Mammary epithelial cell (primary cell): ENCODE measurements at regions of chr1 and their contacts with region 1.

Region 1: DNA sequence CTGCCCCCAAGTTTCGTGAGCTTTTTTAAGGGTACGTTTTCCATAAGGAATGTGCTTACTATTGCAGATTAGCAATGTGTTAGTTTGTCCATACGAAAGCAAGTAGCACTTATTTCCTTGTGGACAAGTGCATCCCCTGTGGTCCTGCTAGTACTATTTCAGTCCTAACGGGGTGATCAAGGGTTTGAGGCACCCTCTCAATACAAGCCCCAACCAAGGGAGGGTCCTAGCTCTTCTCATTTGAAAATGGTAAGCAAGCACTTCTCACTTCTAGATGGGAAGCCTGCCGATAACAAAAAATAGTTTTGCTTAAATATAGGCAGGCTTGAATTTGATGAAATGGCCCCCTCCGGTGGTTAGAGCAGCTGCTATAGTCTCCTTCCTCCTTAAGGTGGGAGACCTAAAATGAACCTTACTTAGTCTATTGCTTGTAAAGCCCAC is 64.0 kb upstream of the HMCN1 start:
- DNase-seq: peak; percentile 35
- H3K4me3 ChIP-seq: no peak overlapping the region
- H3K27ac ChIP-seq: no peak overlapping the region
- H3K4me1 ChIP-seq: no peaks in the 10 kb centered on the region
- H3K27me3 ChIP-seq: no peaks in the 10 kb centered on the region
- CTCF ChIP-seq: peak; percentile 54 to 66

Region 2: DNA sequence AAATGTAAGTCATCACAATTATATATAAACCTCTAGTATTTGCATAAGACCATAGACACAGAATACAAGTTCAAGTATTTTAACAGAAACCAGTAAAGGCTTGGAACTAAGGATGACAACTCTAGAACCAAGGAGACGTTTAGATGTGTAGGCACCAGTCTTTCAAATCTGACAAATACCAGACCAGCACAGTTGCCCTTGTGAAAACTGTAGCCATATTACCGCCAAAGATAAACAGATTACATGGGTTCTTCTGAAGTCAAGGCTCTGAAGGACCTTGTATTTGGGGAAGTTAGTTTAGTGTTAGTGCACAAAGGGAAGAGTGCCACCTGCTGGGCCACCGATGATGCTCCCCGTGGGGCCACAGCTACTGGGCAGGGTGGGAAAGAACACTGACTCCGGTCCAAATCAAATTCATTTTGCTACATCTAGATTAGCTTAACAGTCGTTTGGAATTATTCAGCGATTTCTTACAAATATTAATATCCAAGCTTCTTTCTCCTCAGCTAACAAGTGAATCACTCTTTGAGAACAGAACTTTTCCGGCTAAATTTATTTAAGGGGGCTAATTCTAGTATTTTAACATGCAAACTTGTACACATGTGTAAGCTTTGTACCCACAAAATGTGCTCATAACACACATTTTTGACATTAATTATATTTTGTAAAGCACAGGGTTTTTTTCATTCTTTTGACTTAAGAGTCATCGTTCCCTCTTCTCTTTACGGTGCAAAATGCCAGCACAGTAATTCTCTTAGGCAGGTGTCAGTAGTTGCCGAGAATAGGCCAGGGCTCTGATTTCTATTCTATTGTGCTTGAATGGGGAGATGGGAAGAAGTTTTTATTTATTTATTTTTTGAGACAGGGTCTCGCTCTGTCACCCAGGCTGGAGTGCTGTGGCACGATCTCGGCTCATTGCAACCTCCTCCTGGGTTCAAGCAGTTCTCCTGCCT is 687.9 kb before region 1 on chr1:
- CTCF ChIA-PET with region 1: no interaction called
- dilution Hi-C with region 1: no loop called
- in situ Hi-C with region 1: no loop called
- intact Hi-C with region 1: loop called (anchors 5 kb)
- DNase-seq: peak; percentile 58
- H3K4me3 ChIP-seq: no peak overlapping the region
- H3K27ac ChIP-seq: no peak overlapping the region
- H3K4me1 ChIP-seq: no peaks in the 10 kb centered on the region
- H3K27me3 ChIP-seq: peaks cover 2% of the 10 kb centered on the region
- CTCF ChIP-seq: peak; percentile 94 to 98

Region 3: GRCh38 chr1:185238447-185238846 is 431.8 kb before region 1 on chr1:
- CTCF ChIA-PET with region 1: no interaction called
- dilution Hi-C with region 1: no loop called
- in situ Hi-C with region 1: no loop called
- intact Hi-C with region 1: loop called (anchors 1 kb)
- DNase-seq: no peak
- H3K4me3 ChIP-seq: no peak overlapping the region
- H3K27ac ChIP-seq: no peak overlapping the region
- H3K4me1 ChIP-seq: no peaks in the 10 kb centered on the region
- H3K27me3 ChIP-seq: no peaks in the 10 kb centered on the region
- CTCF ChIP-seq: peak; percentile 44 to 57

Region 4: GRCh38 chr1:185338719-185339622 is 331.2 kb before region 1 on chr1:
- CTCF ChIA-PET with region 1: no interaction called
- dilution Hi-C with region 1: no loop called
- in situ Hi-C with region 1: no loop called
- intact Hi-C with region 1: no loop called
- DNase-seq: peak; percentile 26
- H3K4me3 ChIP-seq: no peak overlapping the region
- H3K27ac ChIP-seq: no peak overlapping the region
- H3K4me1 ChIP-seq: no peaks in the 10 kb centered on the region
- H3K27me3 ChIP-seq: no peaks in the 10 kb centered on the region
- CTCF ChIP-seq: no peak

Region 5: DNA sequence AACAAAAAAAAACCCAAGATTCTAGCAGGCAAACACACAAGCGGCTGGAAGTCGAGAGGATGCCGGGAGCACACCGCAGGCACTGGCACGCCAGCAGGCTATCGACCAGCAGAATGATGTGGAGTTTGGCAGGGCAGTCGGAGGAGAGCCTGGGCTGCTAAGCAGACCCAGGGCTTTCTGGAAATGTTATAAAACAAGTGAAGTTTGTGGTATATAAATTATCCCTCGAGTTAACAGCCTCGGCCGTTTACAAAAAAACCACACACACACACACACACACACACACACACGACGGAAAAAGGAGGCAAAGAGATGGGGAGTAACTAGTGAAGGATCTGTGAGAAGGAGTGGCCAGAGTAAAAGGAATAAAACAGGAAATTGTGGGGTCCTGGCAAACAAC is 265.9 kb before region 1 on chr1:
- CTCF ChIA-PET with region 1: no interaction called
- dilution Hi-C with region 1: no loop called
- in situ Hi-C with region 1: no loop called
- intact Hi-C with region 1: loop called (anchors 10 kb)
- DNase-seq: no peak
- H3K4me3 ChIP-seq: no peak overlapping the region
- H3K27ac ChIP-seq: peak overlapping the region; percentile 12
- H3K4me1 ChIP-seq: peaks cover 38% of the 10 kb centered on the region
- H3K27me3 ChIP-seq: no peaks in the 10 kb centered on the region
- CTCF ChIP-seq: no peak

Region 6: GRCh38 chr1:185559684-185560331 is 110.4 kb before region 1 on chr1:
- CTCF ChIA-PET with region 1: no interaction called
- dilution Hi-C with region 1: no loop called
- in situ Hi-C with region 1: no loop called
- intact Hi-C with region 1: loop called (anchors 1 kb)
- DNase-seq: peak; percentile 65
- H3K4me3 ChIP-seq: no peak overlapping the region
- H3K27ac ChIP-seq: no peak overlapping the region
- H3K4me1 ChIP-seq: peaks cover 17% of the 10 kb centered on the region
- H3K27me3 ChIP-seq: no peaks in the 10 kb centered on the region
- CTCF ChIP-seq: peak; percentile 60 to 74

Region 7: GRCh38 chr1:185595835-185596667 is 74.2 kb before region 1 on chr1:
- CTCF ChIA-PET with region 1: no interaction called
- dilution Hi-C with region 1: no loop called
- in situ Hi-C with region 1: no loop called
- intact Hi-C with region 1: loop called (anchors 10 kb)
- DNase-seq: peak; percentile 44
- H3K4me3 ChIP-seq: no peak overlapping the region
- H3K27ac ChIP-seq: no peak overlapping the region
- H3K4me1 ChIP-seq: peaks cover 8% of the 10 kb centered on the region
- H3K27me3 ChIP-seq: no peaks in the 10 kb centered on the region
- CTCF ChIP-seq: peak; percentile 77 to 88

Region 8: GRCh38 chr1:185652348-185652747 is 17.9 kb before region 1 on chr1:
- CTCF ChIA-PET with region 1: interaction called, 42 read pairs
- dilution Hi-C with region 1: no loop called
- in situ Hi-C with region 1: no loop called
- intact Hi-C with region 1: no loop called
- DNase-seq: no peak
- H3K4me3 ChIP-seq: no peak overlapping the region
- H3K27ac ChIP-seq: no peak overlapping the region
- H3K4me1 ChIP-seq: peaks cover 6% of the 10 kb centered on the region
- H3K27me3 ChIP-seq: no peaks in the 10 kb centered on the region
- CTCF ChIP-seq: peak; percentile 24 to 33